Mammary epithelial cell (primary cell): ENCODE measurements at regions of chr10 and their contacts with region 1.

Region 1: DNA sequence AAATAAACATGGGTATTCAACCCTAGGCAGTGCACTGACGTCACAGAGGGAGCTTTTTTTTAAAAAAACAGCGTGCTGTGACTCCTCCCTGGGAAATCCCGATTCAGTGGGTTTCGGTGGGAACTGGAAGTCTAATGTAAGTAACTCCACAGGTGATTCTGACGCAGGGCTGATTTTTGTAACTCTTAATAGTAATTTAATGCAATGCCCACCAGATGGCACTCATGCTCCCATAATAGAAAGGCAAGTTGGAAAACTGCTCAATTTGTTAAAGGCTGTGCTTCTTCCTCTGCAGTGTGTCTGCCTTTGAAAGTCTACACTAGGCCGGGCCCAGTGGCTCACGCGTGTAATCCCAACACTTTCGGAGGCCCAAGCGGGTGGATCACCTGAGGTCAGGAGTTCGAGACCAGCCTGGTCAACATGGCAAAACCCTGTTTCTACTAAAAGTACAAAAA is 10.9 kb upstream of the RSU1 start:
- DNase-seq: peak; percentile 69
- H3K4me3 ChIP-seq: no peak overlapping the region
- H3K27ac ChIP-seq: no peak overlapping the region
- H3K4me1 ChIP-seq: peaks cover 13% of the 10 kb centered on the region
- H3K27me3 ChIP-seq: no peaks in the 10 kb centered on the region
- CTCF ChIP-seq: peak; percentile 41 to 61

Region 2: GRCh38 chr10:16843252-16843870 is 15.2 kb after region 1 on chr10:
- CTCF ChIA-PET with region 1: no interaction called
- dilution Hi-C with region 1: no loop called
- in situ Hi-C with region 1: no loop called
- intact Hi-C with region 1: no loop called
- DNase-seq: peak; percentile 61
- H3K4me3 ChIP-seq: no peak overlapping the region
- H3K27ac ChIP-seq: no peak overlapping the region
- H3K4me1 ChIP-seq: peaks cover 2% of the 10 kb centered on the region
- H3K27me3 ChIP-seq: no peaks in the 10 kb centered on the region
- CTCF ChIP-seq: peak; percentile 38 to 43

Region 3: GRCh38 chr10:17181758-17182157 is 353.6 kb after region 1 on chr10:
- CTCF ChIA-PET with region 1: interaction called, 14 read pairs
- dilution Hi-C with region 1: no loop called
- in situ Hi-C with region 1: no loop called
- intact Hi-C with region 1: no loop called
- DNase-seq: no peak
- H3K4me3 ChIP-seq: no peak overlapping the region
- H3K27ac ChIP-seq: no peak overlapping the region
- H3K4me1 ChIP-seq: no peaks in the 10 kb centered on the region
- H3K27me3 ChIP-seq: no peaks in the 10 kb centered on the region
- CTCF ChIP-seq: no peak

Region 4: GRCh38 chr10:17257466-17258321 is 429.6 kb after region 1 on chr10:
- CTCF ChIA-PET with region 1: no interaction called
- dilution Hi-C with region 1: no loop called
- in situ Hi-C with region 1: loop called in 1 of 2 experiments (anchors 5 kb)
- intact Hi-C with region 1: loop called (anchors 1 kb)
- DNase-seq: peak; percentile 58
- H3K4me3 ChIP-seq: no peak overlapping the region
- H3K27ac ChIP-seq: no peak overlapping the region
- H3K4me1 ChIP-seq: no peaks in the 10 kb centered on the region
- H3K27me3 ChIP-seq: no peaks in the 10 kb centered on the region
- CTCF ChIP-seq: peak; percentile 83 to 86